Panc1 (cell line): ENCODE measurements at regions of chr3 and their contacts with region 1.

Region 1: DNA sequence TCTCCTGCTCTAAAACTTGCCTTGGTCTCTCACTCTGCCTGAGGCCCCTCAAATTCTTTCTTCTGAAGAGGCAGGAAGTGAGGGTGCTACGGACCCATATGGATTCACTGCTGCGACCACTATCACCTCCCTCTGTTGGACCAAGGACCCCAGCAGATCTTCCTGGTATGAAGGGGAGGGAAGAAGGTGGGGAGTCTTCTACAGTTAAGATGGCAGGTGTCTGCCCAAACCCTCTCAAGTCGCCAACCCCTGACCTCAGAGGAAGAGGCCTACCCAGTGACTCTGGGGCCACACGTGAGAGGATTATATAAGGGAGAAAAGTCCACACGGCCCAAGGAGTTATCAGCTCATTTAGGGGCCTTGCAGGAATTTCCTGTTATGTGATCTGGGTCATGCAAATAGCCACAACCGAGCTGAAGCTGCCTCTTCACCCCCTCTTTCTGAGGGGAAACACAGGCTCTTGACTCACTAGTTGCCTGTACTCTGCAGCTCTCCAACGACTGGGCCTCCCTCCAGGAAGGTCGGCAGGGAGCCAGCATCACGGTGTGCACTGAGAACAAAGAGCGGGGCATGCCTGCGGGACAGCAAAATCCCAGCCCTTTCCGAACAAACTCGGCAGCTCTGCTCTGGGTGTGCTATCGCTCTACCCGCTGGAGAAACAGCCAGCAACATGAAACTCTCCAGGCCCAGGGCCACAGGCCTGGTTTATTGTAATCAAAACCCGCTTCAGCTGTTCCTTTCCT is 116.0 kb downstream of the XXYLT1 start:
- DNase-seq: no peak
- ATAC-seq: peak; percentile 73
- H3K4me3 ChIP-seq: peak overlapping the region in 1 of 2 experiments; percentile 16; a peak in 1 of 4 replicates
- H3K27ac ChIP-seq: peak overlapping the region; percentile 87
- H3K4me1 ChIP-seq: peaks cover 59% of the 10 kb centered on the region
- H3K27me3 ChIP-seq: no peaks in the 10 kb centered on the region
- CTCF ChIP-seq: no peak

Region 2: GRCh38 chr3:195259475-195260279 is 104.7 kb after region 1 on chr3:
- CTCF ChIA-PET with region 1: interaction called, 3 read pairs
- POLR2A ChIA-PET with region 1: no interaction called
- in situ Hi-C with region 1: no loop called
- intact Hi-C with region 1: loop called (anchors 10 kb)
- DNase-seq: no peak
- ATAC-seq: peak; percentile 77
- H3K4me3 ChIP-seq: peak overlapping the region; percentile 52 to 71
- H3K27ac ChIP-seq: peak overlapping the region; percentile 87
- H3K4me1 ChIP-seq: peaks cover 22% of the 10 kb centered on the region
- H3K27me3 ChIP-seq: no peaks in the 10 kb centered on the region
- CTCF ChIP-seq: peak; percentile 100